GM23248 (cell line): ENCODE measurements at regions of chr5 and their contacts with region 1.

Region 1: GRCh38 chr5:10401498-10401897 is 40.2 kb upstream of the ROPN1L start:
- DNase-seq: no peak
- H3K4me3 ChIP-seq: no peak overlapping the region
- H3K27ac ChIP-seq: peak overlapping the region; percentile 61
- H3K4me1 ChIP-seq: peaks cover 11% of the 10 kb centered on the region
- H3K27me3 ChIP-seq: no peaks in the 10 kb centered on the region

Region 2: DNA sequence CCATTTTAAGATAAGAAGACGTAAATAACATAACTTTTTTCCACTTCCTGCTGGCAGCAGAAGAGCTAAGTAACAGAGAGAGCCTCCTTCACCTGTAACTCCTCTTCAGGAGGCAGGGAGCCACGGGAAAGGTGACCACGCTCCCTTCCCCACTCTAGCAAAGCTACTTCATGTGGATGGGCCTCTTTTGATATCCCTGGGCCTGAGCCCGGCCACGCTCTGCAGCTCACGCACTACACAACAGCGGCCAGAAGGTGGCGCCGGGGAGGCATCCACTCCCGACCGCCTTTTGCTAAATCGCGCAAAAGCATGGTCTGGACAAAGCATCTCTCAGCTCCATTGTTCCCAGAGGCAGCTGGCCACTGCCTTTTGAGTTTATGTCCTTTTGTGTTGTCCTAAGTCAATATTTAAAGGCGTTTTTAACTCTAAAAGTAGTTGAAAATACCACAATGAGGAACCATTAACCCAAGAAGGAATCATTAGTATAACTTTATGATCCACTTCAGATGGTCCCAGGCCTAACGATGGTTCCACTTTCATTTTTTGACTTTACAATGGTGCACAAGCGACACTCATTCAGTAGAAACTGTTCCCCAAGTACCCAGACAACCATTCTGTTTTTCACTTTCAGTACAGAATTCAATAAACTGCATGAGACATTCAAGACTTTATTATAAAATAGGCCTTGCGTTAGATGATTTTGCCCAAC is 117.4 kb before region 1 on chr5:
- in situ Hi-C with region 1: loop called (anchors 10 kb)
- DNase-seq: peak; percentile 89
- H3K4me3 ChIP-seq: no peak overlapping the region
- H3K27ac ChIP-seq: no peak overlapping the region
- H3K4me1 ChIP-seq: peaks cover 3% of the 10 kb centered on the region; the same call in 1 of the 2 replicates
- H3K27me3 ChIP-seq: no peaks in the 10 kb centered on the region